ENCODE measurements at regions of chr7 and their contacts with region 1.

Region 1: GRCh38 chr7:51366930-51367613 is 50.5 kb upstream of the COBL start:
- DNase-seq: no peak
- ATAC-seq: peak; percentile 94
- H3K4me3 ChIP-seq: no peak overlapping the region
- H3K27ac ChIP-seq: no peak overlapping the region
- H3K4me1 ChIP-seq: peaks cover 0 to 8% of the 10 kb centered on the region in 2 experiments; a peak in 1 of 4 replicates
- H3K27me3 ChIP-seq: no peaks in the 10 kb centered on the region
- CTCF ChIP-seq: peak; percentile 65 to 85 (median 76); a peak in 5 of 6 replicates
- POLR2A ChIP-seq: no peak
- RAD21 ChIP-seq: peak; percentile 79

Region 2: GRCh38 chr7:50449881-50450589 is 917.0 kb before region 1 on chr7 and contains the start of gene FIGNL1:
- CTCF ChIA-PET with region 1: no interaction called
- POLR2A ChIA-PET with region 1: no interaction called
- RAD21 ChIA-PET with region 1: no interaction called
- intact Hi-C with region 1: loop called (anchors 10 kb)
- DNase-seq: peak; percentile 55
- ATAC-seq: peak; percentile 87
- H3K4me3 ChIP-seq: peak within 1 kb of the TSS; percentile 74 to 75
- H3K27ac ChIP-seq: peak within 1 kb of the TSS; percentile 69
- H3K4me1 ChIP-seq: peaks cover 33 to 43% of the 10 kb centered on the region in 2 experiments
- H3K27me3 ChIP-seq: peaks cover 7% of the 10 kb centered on the region; the same call in 1 of the 2 replicates
- CTCF ChIP-seq: no peak
- POLR2A ChIP-seq: no peak
- RAD21 ChIP-seq: no peak
- total RNA-seq, gene FIGNL1: 28.1 TPM

Region 3: DNA sequence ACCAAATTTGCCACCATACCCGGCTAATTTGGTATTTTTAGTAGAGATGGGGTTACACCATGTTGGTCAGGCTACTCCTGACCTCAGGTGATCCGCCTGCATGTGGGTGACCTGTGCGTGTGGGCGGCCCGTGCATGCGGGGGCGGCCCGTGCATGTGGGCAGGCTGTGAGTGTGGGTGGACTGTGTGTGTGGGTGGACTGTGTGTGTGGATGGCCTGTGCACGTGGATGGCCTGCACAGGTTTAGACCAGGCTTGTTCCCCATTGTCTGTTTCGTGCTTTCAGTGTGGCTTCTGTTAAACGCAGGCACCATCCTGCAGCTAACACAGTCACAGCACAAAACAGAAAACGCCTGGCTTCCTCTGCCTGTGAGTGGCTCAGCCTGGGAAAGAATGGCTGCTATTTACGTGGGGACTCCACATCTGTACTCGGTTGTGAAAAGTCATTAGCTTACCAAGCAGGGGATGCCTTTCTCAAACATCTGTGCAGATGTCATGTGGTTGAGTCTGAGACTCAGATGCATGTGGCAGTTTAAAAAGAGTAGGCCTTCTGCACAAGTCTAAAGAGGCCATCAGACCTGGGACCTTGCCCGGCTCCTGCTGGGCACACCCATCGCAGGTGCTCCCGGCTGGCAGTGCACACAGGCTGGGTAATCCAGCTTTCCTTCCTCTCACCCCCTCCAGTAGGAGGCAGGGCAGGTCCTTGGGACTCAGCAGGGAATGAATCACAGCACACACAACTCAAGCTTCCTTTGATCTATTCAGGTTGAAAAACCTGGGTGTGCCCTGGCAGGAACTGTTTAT is 142.1 kb before region 1 on chr7:
- CTCF ChIA-PET with region 1: interaction called, 29 read pairs
- POLR2A ChIA-PET with region 1: no interaction called
- RAD21 ChIA-PET with region 1: interaction called, 3 to 4 read pairs
- intact Hi-C with region 1: loop called (anchors 5 kb)
- DNase-seq: peak; percentile 45
- ATAC-seq: peak; percentile 98
- H3K4me3 ChIP-seq: no peak overlapping the region
- H3K27ac ChIP-seq: no peak overlapping the region
- H3K4me1 ChIP-seq: peaks cover 7 to 25% of the 10 kb centered on the region in 2 experiments; a peak in 3 of 4 replicates
- H3K27me3 ChIP-seq: no peaks in the 10 kb centered on the region
- CTCF ChIP-seq: peak; percentile 66 to 78 (median 68); a peak in 5 of 6 replicates
- POLR2A ChIP-seq: no peak
- RAD21 ChIP-seq: peak; percentile 84

Region 4: GRCh38 chr7:51253161-51253560 is 113.9 kb before region 1 on chr7:
- CTCF ChIA-PET with region 1: interaction called, 7 read pairs
- POLR2A ChIA-PET with region 1: no interaction called
- RAD21 ChIA-PET with region 1: interaction called in 1 of 2 experiments, 4 read pairs
- intact Hi-C with region 1: loop called (anchors 5 kb)
- DNase-seq: no peak
- ATAC-seq: no peak
- H3K4me3 ChIP-seq: no peak overlapping the region
- H3K27ac ChIP-seq: no peak overlapping the region
- H3K4me1 ChIP-seq: peaks cover 28 to 51% of the 10 kb centered on the region in 2 experiments
- H3K27me3 ChIP-seq: no peaks in the 10 kb centered on the region
- CTCF ChIP-seq: peak; percentile 34 to 44 (median 42); a peak in 3 of 6 replicates
- POLR2A ChIP-seq: no peak
- RAD21 ChIP-seq: peak; percentile 74

Region 5: DNA sequence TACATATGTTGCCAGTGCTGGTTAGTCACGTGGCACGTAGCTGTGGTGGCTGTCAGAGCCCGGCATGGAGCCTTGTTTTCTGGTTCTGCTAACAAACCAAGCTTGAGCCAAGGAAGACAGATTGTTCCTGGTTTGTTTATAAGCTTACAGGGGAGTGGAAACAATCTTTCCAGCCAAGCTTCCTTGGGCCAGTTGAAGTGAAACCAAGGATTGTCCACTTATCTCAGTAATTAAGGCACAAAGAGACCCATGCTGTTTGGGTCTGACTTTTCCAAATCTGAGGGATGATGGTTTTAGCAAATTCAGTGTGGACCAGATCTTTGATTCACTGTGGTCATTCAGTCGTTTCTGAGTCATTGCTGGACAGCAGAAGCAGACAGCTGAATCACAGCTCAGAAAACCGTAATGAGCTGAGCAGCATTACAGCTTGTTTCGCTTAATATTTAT is 246.9 kb after region 1 on chr7:
- CTCF ChIA-PET with region 1: no interaction called
- POLR2A ChIA-PET with region 1: no interaction called
- RAD21 ChIA-PET with region 1: no interaction called
- intact Hi-C with region 1: no loop called
- DNase-seq: no peak
- ATAC-seq: no peak
- H3K4me3 ChIP-seq: no peak overlapping the region
- H3K27ac ChIP-seq: no peak overlapping the region
- H3K4me1 ChIP-seq: no peaks in the 10 kb centered on the region
- H3K27me3 ChIP-seq: peaks cover 8% of the 10 kb centered on the region; the same call in 1 of the 2 replicates
- CTCF ChIP-seq: no peak
- POLR2A ChIP-seq: no peak
- RAD21 ChIP-seq: no peak

Region 6: DNA sequence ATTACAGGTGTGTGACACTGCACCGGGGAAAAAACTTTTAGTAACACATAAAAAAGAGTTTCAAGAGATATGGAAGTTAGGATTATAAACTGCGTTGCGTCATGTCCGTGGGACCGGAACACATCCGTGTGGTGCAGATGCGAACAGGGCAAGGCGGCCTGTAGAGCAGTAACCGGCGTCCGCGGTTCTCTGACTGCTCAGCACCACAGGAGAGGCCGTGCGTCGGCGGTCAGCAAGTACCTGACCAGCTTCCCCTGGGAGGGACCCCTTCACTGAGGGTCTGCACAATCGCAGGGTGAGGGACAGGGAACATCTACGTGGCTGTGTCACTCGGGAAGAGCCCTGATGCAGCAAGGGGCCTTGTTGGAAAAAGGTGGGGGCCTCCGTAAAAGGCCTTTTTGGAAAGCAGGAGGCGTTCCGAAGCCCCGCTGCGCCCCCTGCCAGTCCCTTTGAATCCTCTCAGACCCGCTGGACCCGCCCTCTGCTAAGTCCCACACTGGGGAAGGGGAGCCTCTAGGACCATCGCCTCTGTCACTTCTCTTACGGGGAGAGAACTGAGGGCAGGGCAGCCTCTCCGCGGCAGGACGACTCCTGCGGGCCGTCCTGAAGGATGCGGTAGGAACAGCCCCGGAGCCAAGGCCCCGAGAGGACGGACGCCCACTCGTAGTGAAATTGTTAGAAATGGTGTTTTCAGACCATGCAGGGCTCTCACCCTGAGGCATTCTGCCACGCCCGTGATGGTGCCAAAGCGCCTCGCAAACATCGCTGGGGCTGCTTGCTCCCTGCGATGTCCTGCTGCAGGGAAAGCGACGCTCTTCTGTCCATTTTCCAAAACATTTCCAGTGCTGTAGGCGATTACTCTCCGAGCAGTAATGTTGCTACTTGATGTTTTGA is 721.2 kb after region 1 on chr7:
- CTCF ChIA-PET with region 1: no interaction called
- POLR2A ChIA-PET with region 1: no interaction called
- RAD21 ChIA-PET with region 1: no interaction called
- intact Hi-C with region 1: no loop called
- DNase-seq: no peak
- ATAC-seq: no peak
- H3K4me3 ChIP-seq: no peak overlapping the region
- H3K27ac ChIP-seq: no peak overlapping the region
- H3K4me1 ChIP-seq: no peaks in the 10 kb centered on the region
- H3K27me3 ChIP-seq: no peaks in the 10 kb centered on the region
- CTCF ChIP-seq: no peak
- POLR2A ChIP-seq: no peak
- RAD21 ChIP-seq: no peak

Measured in HCT116 (cell line).